Activated CD8-positive, alpha-beta T cell treated with anti-CD3 and anti-CD28 coated beads, Interleukin-2, amount 10 ng/mL, durations not matched to agents 7 days and 5 days (primary cell): ENCODE measurements at regions of chr9 and their contacts with region 1.

Region 1: GRCh38 chr9:4315582-4316215 is 15.8 kb upstream of the GLIS3 start:
- DNase-seq: peak; percentile 79
- ATAC-seq: peak; percentile 98
- H3K4me3 Mint-ChIP-seq: no peak overlapping the region
- H3K27ac Mint-ChIP-seq: no peak overlapping the region
- H3K4me1 Mint-ChIP-seq: peaks cover 2% of the 10 kb centered on the region
- H3K27me3 Mint-ChIP-seq: peaks cover 6% of the 10 kb centered on the region

Region 2: DNA sequence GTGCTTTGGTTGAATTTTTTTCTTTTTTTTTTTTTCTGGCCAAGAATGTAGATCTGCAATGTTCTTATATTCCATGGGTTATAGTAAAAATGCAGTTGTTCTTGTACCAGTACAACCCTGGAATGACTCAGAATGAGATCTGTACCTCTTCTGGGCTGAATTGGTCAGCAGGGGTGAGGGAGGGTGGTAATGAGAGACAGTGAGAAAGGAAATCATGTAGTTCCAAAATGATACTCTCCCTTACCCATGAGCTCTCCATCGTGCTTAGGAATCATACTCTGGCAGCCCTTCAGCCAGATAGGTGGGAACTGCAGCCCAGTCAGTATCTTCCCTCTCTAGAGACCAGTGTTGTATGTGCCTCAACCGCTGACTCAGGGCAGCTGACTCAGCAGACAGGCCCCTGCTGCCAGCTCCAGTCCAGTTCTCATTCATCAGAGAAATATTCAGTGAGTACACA is 13.7 kb before region 1 on chr9:
- CTCF ChIA-PET with region 1: interaction called, 16 read pairs
- POLR2A ChIA-PET with region 1: no interaction called
- DNase-seq: no peak
- ATAC-seq: no peak
- H3K4me3 Mint-ChIP-seq: no peak overlapping the region
- H3K27ac Mint-ChIP-seq: no peak overlapping the region
- H3K4me1 Mint-ChIP-seq: peaks cover 27% of the 10 kb centered on the region
- H3K27me3 Mint-ChIP-seq: peaks cover 39% of the 10 kb centered on the region

Region 3: DNA sequence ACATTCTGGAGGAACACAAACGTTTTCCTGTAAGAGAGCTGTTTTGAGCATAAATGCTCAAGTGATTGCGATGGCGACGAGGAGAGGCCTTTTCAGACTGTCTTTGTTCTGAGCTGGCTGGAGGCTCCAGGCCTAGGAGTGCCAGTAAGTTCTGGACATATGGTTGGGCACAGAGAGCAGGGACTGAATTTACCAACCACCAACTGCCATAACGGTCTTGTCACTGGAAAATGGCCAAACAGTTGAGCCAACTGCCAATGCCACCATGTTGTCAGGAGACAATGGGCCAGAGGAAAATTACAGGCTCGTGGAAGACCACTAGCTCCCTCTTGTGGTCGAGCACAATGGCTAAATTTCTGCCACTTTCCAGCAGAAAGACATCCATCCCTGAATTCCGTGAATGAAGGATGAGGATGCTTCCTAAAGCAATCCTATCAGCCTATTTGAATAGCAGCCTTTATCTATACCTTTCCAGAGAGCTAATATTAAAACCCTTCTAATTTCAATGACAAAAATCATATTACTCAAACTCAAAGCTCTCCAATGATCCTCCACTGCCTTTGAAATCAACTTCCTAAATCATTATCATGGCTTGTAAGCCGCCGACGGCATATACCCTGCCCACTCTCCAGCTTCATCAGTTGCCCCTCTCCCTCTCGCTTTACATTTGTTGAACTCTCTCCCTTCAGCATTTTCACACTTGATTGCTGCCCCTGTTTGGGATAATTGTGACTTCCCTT is 51.1 kb after region 1 on chr9:
- CTCF ChIA-PET with region 1: interaction called, 56 read pairs
- POLR2A ChIA-PET with region 1: no interaction called
- DNase-seq: peak; percentile 36
- ATAC-seq: no peak
- H3K4me3 Mint-ChIP-seq: no peak overlapping the region
- H3K27ac Mint-ChIP-seq: no peak overlapping the region
- H3K4me1 Mint-ChIP-seq: no peaks in the 10 kb centered on the region
- H3K27me3 Mint-ChIP-seq: peaks cover under 1% of the 10 kb centered on the region

Region 4: DNA sequence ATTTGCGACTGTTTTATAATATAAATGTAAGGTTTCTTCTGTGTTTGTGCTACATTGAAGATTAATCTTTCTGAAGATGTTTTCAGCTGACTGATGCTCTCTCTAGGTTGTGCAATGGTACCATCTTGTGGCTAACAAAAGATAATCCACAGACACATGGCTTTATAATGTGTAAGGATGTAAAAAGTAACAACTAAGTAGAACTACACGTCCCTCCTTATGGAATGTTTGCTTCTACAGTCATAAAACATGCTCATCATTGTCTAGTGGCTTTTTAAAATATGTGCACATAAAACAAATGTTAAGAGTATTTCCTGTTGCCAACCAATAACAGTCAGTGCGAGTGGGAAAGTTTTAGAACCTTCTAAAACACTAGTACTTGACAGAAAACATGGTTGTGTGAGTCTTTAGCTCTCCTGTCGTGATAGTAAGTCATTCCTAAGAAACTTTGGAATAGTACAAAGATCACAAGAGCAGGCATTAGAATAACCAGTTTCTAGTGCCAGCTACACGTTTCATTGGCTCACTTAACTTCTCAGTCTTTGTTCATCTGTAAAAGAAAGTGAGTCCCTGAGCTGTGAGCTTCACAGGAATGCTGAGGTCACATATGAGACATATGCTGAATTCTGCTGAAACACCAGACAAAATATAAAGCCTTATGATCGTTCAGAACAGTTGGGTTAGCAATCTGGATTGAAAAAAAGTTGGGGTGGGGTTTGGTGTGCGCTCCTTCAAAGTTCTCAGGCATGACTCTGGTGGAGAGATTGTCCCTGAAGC is 59.9 kb after region 1 on chr9:
- CTCF ChIA-PET with region 1: interaction called, 13 read pairs
- POLR2A ChIA-PET with region 1: no interaction called
- DNase-seq: no peak
- ATAC-seq: no peak
- H3K4me3 Mint-ChIP-seq: no peak overlapping the region
- H3K27ac Mint-ChIP-seq: no peak overlapping the region
- H3K4me1 Mint-ChIP-seq: no peaks in the 10 kb centered on the region
- H3K27me3 Mint-ChIP-seq: peaks cover 17% of the 10 kb centered on the region

Region 5: DNA sequence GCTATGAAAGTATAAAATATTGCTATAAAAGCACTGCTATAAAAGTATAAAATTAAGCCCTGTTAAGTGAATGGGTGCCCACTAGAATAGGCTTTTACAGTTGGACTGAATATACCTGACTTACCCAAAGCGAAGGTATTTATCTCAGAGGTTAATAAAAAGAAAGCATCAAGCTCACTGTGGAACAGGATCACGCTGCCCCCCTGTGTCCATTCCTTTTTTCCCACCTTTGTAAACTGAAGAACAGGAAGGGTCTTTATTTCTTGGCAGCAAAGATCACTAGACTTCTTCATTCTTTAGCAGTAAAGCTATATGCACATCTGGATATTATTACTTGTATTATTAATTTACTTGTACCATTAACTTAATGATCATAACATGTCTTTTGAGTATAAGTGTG is 324.3 kb after region 1 on chr9:
- CTCF ChIA-PET with region 1: interaction called, 14 read pairs
- POLR2A ChIA-PET with region 1: no interaction called
- DNase-seq: peak; percentile 69
- ATAC-seq: peak; percentile 49
- H3K4me3 Mint-ChIP-seq: no peak overlapping the region
- H3K27ac Mint-ChIP-seq: no peak overlapping the region
- H3K4me1 Mint-ChIP-seq: peaks cover 2% of the 10 kb centered on the region
- H3K27me3 Mint-ChIP-seq: peaks cover 4% of the 10 kb centered on the region